T-cell (primary cell): ENCODE measurements at regions of chr5 and their contacts with region 1.

Region 1: DNA sequence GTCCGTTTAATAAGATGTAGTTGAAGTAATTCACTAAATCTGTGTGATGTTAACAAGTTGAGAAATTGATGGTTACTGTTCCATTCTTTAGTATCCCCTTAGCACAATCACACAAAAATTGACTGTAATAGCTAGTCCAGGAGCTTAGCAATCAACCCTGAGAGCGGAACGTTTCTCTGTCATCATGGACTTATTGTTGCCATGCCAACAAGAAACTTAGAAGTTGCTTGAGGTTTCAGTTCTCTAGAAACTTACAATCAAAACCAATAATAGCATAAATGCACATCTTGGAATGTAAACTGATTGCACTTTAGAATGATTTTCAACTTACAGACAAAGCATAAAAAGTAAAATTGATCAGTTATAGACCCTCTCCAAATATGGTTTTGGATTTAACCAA is 125.4 kb upstream of the ANKH start:
- DNase-seq: peak in 1 of 35 experiments; percentile 19
- ATAC-seq: no peak
- H3K4me3 ChIP-seq: no peak overlapping the region
- H3K4me3 Mint-ChIP-seq: no peak overlapping the region
- H3K27ac ChIP-seq: no peak overlapping the region
- H3K27ac Mint-ChIP-seq: no peak overlapping the region
- H3K4me1 ChIP-seq: peaks cover 0 to 8% of the 10 kb centered on the region in 2 experiments
- H3K4me1 Mint-ChIP-seq: peaks cover 11 to 20% (median 13%) of the 10 kb centered on the region in 3 donors
- H3K27me3 ChIP-seq: peaks cover 0 to 2% of the 10 kb centered on the region in 2 experiments
- H3K27me3 Mint-ChIP-seq: peaks cover 0 to 12% of the 10 kb centered on the region in 2 donors

Region 2: GRCh38 chr5:14871210-14872069 is 125.6 kb before region 1 on chr5 and contains the start of gene ANKH:
- CTCF ChIA-PET with region 1: interaction called, 4 to 15 read pairs
- POLR2A ChIA-PET with region 1: interaction called in 1 of 2 experiments, 6 read pairs
- DNase-seq: peak; percentile 61 to 93 (median 79)
- ATAC-seq: peak; percentile 86 to 94 (median 90)
- H3K4me3 ChIP-seq: peak within 1 kb of the TSS; percentile 73
- H3K4me3 Mint-ChIP-seq: peak within 1 kb of the TSS; percentile 87 to 98 (median 96)
- H3K27ac ChIP-seq: peak within 1 kb of the TSS; percentile 79
- H3K27ac Mint-ChIP-seq: peak within 1 kb of the TSS; percentile 91 to 98
- H3K4me1 ChIP-seq: peaks cover 17 to 22% of the 10 kb centered on the region in 2 experiments
- H3K4me1 Mint-ChIP-seq: peaks cover 38 to 40% (median 39%) of the 10 kb centered on the region in 3 donors
- H3K27me3 ChIP-seq: no peaks in the 10 kb centered on the region
- H3K27me3 Mint-ChIP-seq: no peaks in the 10 kb centered on the region
- total RNA-seq, gene ANKH: 98.9 to 200 (median 167) TPM

Region 3: GRCh38 chr5:14900731-14901461 is 96.1 kb before region 1 on chr5:
- CTCF ChIA-PET with region 1: no interaction called
- POLR2A ChIA-PET with region 1: interaction called in 1 of 2 experiments, 11 read pairs
- DNase-seq: no peak
- ATAC-seq: no peak
- H3K4me3 ChIP-seq: no peak overlapping the region
- H3K4me3 Mint-ChIP-seq: no peak overlapping the region
- H3K27ac ChIP-seq: no peak overlapping the region
- H3K27ac Mint-ChIP-seq: no peak overlapping the region
- H3K4me1 ChIP-seq: no peaks in the 10 kb centered on the region
- H3K4me1 Mint-ChIP-seq: no peaks in the 10 kb centered on the region
- H3K27me3 ChIP-seq: peaks cover 0 to 3% of the 10 kb centered on the region in 2 experiments
- H3K27me3 Mint-ChIP-seq: peaks cover 2 to 5% of the 10 kb centered on the region in 2 donors

Region 4: GRCh38 chr5:14958196-14958595 is 38.8 kb before region 1 on chr5:
- CTCF ChIA-PET with region 1: interaction called, 4 to 14 read pairs
- POLR2A ChIA-PET with region 1: no interaction called
- DNase-seq: no peak
- ATAC-seq: no peak
- H3K4me3 ChIP-seq: no peak overlapping the region
- H3K4me3 Mint-ChIP-seq: no peak overlapping the region
- H3K27ac ChIP-seq: no peak overlapping the region
- H3K27ac Mint-ChIP-seq: no peak overlapping the region
- H3K4me1 ChIP-seq: no peaks in the 10 kb centered on the region
- H3K4me1 Mint-ChIP-seq: no peaks in the 10 kb centered on the region
- H3K27me3 ChIP-seq: peaks cover 0 to 4% of the 10 kb centered on the region in 2 experiments
- H3K27me3 Mint-ChIP-seq: peaks cover 3 to 4% of the 10 kb centered on the region in 2 donors